ENCODE measurements at regions of chr12 and their contacts with region 1.

Region 1: GRCh38 chr12:121925358-121925695 is 6.9 kb downstream of the CFAP251 start:
- DNase-seq: no peak
- H3K4me3 ChIP-seq: no peak overlapping the region
- H3K27ac ChIP-seq: no peak overlapping the region
- H3K4me1 ChIP-seq: no peaks in the 10 kb centered on the region
- H3K27me3 ChIP-seq: no peaks in the 10 kb centered on the region
- CTCF ChIP-seq: no peak

Region 2: DNA sequence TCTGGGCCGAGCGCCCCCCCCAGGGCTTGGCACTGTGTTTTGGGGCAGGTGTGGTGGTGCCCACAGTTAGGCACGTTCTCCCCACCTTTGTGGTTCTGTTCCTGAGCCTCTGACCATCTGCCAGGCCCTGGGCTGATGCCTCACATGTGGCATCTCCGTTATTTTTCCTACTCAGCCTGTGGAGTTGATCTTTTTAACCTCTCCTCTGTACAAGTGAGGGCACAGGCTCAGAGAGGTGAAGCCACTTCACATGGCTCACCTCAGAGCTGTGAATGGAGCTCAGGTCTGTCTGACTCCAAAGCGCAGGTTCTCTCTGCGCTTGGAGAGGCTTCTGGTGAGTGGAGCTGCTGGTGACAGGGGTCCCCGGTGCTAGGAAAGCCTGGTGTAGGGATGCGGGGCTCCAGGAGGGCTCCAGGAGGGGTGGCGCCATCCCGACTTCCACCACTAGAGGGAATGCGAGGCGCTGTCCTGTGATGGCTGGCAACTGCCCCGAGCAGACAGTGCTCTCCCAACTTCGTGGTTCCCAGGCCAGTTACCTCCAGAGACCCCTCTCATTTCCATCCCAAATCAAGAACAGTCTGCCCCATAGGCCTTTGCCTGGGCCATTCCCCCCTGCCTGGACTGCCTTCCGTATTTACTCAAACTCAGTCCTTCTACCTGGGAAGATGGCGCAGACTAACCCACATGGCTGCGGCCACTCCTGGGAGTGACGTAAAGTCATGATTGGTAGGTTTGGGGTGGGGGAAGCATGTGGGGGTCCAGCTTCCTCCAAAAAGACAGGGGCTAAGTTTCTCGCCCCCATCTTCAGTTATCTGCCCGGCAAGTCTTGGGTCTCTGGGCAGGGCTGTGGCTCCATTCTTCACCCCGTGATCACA is 106.3 kb after region 1 on chr12:
- CTCF ChIA-PET with region 1: no interaction called
- POLR2A ChIA-PET with region 1: no interaction called
- intact Hi-C with region 1: loop called (anchors 10 kb)
- DNase-seq: peak in 1 of 2 experiments; percentile 37
- H3K4me3 ChIP-seq: no peak overlapping the region
- H3K27ac ChIP-seq: no peak overlapping the region
- H3K4me1 ChIP-seq: peaks cover 20% of the 10 kb centered on the region
- H3K27me3 ChIP-seq: no peaks in the 10 kb centered on the region
- CTCF ChIP-seq: peak; percentile 77

Region 3: DNA sequence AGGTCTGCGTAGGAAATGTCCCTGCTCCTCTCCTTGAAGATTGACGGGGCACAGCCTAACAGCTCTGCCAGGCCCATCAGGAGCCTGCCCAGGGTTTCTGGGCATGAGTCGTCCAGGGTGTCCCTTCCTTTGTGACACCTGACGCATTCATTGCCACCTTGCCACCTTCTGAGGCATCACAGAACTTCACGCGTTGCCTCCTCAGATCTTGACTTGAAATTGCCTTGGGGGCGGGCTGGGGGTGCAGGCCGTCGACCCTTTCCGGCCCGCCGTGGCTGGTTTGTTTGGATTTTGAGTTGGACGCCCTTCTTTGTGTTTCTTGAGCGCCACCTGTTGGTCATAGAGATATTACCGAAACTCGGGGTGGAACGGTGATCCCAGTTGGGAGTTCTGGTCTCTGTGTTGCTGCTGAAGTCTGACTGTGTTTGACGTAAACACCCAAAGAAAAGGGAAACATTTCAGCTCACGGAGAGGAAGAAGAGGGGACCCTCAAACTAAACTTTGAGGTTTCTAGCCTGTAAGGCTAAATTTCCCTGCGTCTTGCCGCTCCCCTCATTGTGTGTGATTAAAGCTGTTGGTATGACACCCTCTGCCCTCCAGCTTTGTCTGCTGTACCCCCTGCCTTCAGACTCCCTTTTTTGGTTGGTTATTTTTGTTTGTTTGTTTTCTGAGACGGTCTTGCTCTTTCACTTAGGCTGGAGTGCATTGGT is 197.9 kb after region 1 on chr12:
- CTCF ChIA-PET with region 1: no interaction called
- POLR2A ChIA-PET with region 1: no interaction called
- intact Hi-C with region 1: loop called (anchors 10 kb)
- DNase-seq: peak; percentile 53 to 70
- H3K4me3 ChIP-seq: no peak overlapping the region
- H3K27ac ChIP-seq: peak overlapping the region; percentile 49
- H3K4me1 ChIP-seq: peaks cover 5% of the 10 kb centered on the region; the same call in 1 of the 2 replicates
- H3K27me3 ChIP-seq: no peaks in the 10 kb centered on the region
- CTCF ChIP-seq: peak; percentile 89